CD4-positive, alpha-beta memory T cell (primary cell): ENCODE measurements at regions of chr1 and their contacts with region 1.

Region 1: GRCh38 chr1:157090196-157090647 is 9.4 kb downstream of the ETV3L start:
- DNase-seq: peak; percentile 74 to 81 (median 75)
- H3K4me3 ChIP-seq: no peak overlapping the region
- H3K4me3 Mint-ChIP-seq: no peak overlapping the region
- H3K27ac ChIP-seq: no peak overlapping the region
- H3K27ac Mint-ChIP-seq: no peak overlapping the region
- H3K4me1 ChIP-seq: peaks cover 5% of the 10 kb centered on the region
- H3K4me1 Mint-ChIP-seq: peaks cover 0 to 6% (median 3%) of the 10 kb centered on the region in 4 donors
- H3K27me3 ChIP-seq: no peaks in the 10 kb centered on the region
- H3K27me3 Mint-ChIP-seq: peaks cover 2% of the 10 kb centered on the region in 2 donors

Region 2: GRCh38 chr1:157105988-157106812 is 16.0 kb after region 1 on chr1:
- CTCF ChIA-PET with region 1: interaction called, 14 read pairs
- POLR2A ChIA-PET with region 1: no interaction called
- intact Hi-C with region 1: no loop called
- DNase-seq: no peak
- H3K4me3 ChIP-seq: no peak overlapping the region
- H3K4me3 Mint-ChIP-seq: no peak overlapping the region
- H3K27ac ChIP-seq: no peak overlapping the region
- H3K27ac Mint-ChIP-seq: peak overlapping the region in 3 of 7 donors; percentile 29 to 82 (median 48)
- H3K4me1 ChIP-seq: no peaks in the 10 kb centered on the region
- H3K4me1 Mint-ChIP-seq: peaks cover 0 to 3% (median 2%) of the 10 kb centered on the region in 4 donors
- H3K27me3 ChIP-seq: peaks cover 17% of the 10 kb centered on the region
- H3K27me3 Mint-ChIP-seq: peaks cover 13 to 18% of the 10 kb centered on the region in 2 donors

Region 3: GRCh38 chr1:157138220-157139051 is 48.2 kb after region 1 on chr1 and contains the start of gene ETV3:
- CTCF ChIA-PET with region 1: interaction called, 11 read pairs
- POLR2A ChIA-PET with region 1: interaction called, 4 read pairs
- intact Hi-C with region 1: no loop called
- DNase-seq: peak; percentile 86 to 94 (median 88)
- H3K4me3 ChIP-seq: peak within 1 kb of the TSS; percentile 67 to 85
- H3K4me3 Mint-ChIP-seq: peak within 1 kb of the TSS; percentile 94 to 98 (median 96)
- H3K27ac ChIP-seq: peak within 1 kb of the TSS; percentile 92
- H3K27ac Mint-ChIP-seq: peak within 1 kb of the TSS; percentile 89 to 99 (median 98)
- H3K4me1 ChIP-seq: peaks cover 47% of the 10 kb centered on the region
- H3K4me1 Mint-ChIP-seq: peaks cover 44 to 59% (median 52%) of the 10 kb centered on the region in 4 donors
- H3K27me3 ChIP-seq: no peaks in the 10 kb centered on the region
- H3K27me3 Mint-ChIP-seq: no peaks in the 10 kb centered on the region
- total RNA-seq, gene ETV3: 30.5 to 31.8 TPM

Region 4: DNA sequence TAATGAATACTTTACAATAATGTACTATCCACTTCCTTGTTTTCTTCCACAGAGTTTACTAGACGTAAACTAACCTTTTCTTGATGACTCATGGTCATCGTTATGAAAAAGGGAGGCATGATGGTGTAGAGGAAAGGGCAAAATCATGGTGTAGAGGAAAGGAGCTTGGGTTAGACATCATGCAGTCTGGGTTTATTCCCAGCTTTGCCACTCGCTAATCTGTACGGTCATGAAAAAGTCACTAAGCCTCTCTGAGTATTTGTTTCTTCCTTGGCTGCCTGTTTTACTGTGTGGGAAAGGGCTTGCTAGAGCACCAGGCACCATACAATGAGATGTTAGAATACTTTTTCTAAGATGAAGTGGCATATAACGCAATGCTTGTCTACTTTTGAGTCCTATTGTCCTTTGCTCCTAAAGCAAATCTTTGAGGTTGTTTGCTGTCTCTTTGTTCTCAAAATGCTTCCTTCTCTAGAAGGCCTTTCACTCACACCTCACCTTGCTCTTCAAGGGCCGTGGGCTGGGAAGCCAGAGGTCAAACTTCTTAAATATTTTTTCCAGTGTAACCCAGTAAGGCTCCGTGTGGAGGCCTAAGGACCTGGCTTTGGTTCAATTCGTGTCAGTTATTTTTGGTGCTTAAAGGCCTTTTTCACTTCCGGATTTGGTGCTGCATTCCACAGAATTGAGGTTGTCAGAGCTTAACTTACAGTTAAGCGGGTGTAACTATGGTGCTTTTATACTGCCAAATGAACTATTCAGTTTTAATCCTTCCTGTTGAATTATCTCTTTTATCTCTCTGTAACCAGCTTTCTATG is 57.9 kb after region 1 on chr1:
- CTCF ChIA-PET with region 1: interaction called, 460 read pairs
- POLR2A ChIA-PET with region 1: interaction called, 30 read pairs
- intact Hi-C with region 1: no loop called
- DNase-seq: no peak
- H3K4me3 ChIP-seq: no peak overlapping the region
- H3K4me3 Mint-ChIP-seq: no peak overlapping the region
- H3K27ac ChIP-seq: no peak overlapping the region
- H3K27ac Mint-ChIP-seq: peak overlapping the region in 1 of 7 donors; percentile 2
- H3K4me1 ChIP-seq: peaks cover 8% of the 10 kb centered on the region
- H3K4me1 Mint-ChIP-seq: peaks cover 0 to 6% (median 5%) of the 10 kb centered on the region in 4 donors
- H3K27me3 ChIP-seq: no peaks in the 10 kb centered on the region
- H3K27me3 Mint-ChIP-seq: no peaks in the 10 kb centered on the region